ENCODE measurements at regions of chr16 and their contacts with region 1.

Region 1: DNA sequence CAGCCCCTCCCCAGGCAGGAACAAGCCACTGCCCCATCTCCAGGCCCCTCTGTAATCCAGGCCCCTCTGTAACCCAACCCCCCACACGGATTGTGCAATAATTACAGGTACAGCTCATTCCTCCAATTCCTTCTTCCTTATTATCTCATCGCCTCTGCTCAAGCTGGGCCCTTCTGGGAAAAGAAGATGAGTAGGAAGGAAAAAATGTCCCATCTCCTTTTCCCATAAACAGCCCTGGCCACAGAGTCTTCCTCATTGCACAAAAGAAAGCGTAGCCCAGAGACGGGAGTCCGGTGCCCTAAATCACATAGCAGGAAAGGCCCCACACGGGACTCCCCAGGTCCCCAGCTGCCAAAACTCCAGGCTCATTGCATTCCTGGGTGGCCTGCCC is 3.6 kb upstream of the LITAFD start:
- DNase-seq: no peak
- H3K4me3 ChIP-seq: no peak overlapping the region
- H3K4me3 Mint-ChIP-seq: no peak overlapping the region
- H3K27ac ChIP-seq: no peak overlapping the region
- H3K27ac Mint-ChIP-seq: peak overlapping the region in 2 of 8 donors; percentile 60 to 88
- H3K4me1 ChIP-seq: peaks cover 3% of the 10 kb centered on the region
- H3K4me1 Mint-ChIP-seq: peaks cover 20 to 25% (median 22%) of the 10 kb centered on the region in 3 donors
- H3K27me3 ChIP-seq: no peaks in the 10 kb centered on the region
- H3K27me3 Mint-ChIP-seq: no peaks in the 10 kb centered on the region

Region 2: DNA sequence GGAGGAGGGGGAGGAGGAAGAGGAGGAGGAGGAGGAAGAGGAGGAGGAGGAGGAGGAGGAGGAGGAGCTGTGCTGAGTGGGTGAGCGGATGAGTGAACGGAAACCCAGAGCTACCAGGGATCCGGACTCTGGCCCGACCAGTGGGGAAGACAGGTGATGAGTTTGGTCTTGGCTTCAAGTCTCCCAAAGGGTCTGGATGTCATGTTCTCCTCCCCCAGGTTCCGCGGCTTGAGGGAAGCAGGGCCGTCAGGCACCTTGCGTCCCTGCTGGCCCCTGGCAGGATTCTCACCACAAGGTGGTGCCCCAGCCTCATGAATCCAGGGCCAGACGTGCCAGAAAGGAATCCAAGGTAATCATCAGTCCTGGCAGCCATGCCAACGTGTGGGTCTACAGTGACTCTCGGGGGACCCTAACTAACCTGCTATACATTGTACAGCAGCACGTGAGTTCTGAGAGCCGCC is 217.6 kb before region 1 on chr16:
- CTCF ChIA-PET with region 1: interaction called, 24 read pairs
- POLR2A ChIA-PET with region 1: no interaction called
- DNase-seq: peak in 3 of 5 donors; percentile 28 to 71 (median 53)
- H3K4me3 ChIP-seq: no peak overlapping the region
- H3K4me3 Mint-ChIP-seq: no peak overlapping the region
- H3K27ac ChIP-seq: no peak overlapping the region
- H3K27ac Mint-ChIP-seq: no peak overlapping the region
- H3K4me1 ChIP-seq: no peaks in the 10 kb centered on the region
- H3K4me1 Mint-ChIP-seq: no peaks in the 10 kb centered on the region
- H3K27me3 ChIP-seq: no peaks in the 10 kb centered on the region
- H3K27me3 Mint-ChIP-seq: no peaks in the 10 kb centered on the region

Region 3: DNA sequence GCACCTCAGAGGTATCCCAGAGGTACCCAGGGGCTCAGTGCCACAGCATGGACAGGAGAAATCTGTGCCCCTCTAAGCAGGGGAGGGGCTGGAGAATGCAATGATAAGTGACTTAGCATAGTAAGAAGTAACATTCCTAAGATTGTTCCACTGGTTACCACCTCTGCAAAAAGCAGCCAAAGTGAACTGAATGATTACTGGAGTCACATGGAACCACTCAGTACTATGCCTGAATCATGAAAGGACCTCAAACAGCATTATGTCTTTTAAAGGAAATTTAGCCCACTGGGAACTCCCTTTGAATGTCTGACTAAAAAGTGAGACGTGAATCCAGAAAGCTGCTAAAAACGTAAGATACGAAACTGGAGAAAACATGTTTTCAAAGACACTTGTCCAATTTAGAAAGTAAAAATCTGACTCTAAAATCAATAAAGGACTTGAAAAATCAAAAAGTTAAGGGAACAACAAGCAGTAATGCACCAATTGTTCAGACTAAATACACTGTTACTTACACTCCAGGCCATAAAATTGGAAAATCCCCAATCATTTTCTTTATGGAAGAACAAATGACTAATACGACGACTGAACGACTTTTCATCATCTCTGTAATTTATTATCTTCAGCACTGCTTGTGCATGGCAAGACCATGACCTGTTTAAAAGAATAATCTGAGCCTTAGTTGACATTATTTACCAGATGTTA is 42.3 kb after region 1 on chr16:
- CTCF ChIA-PET with region 1: no interaction called
- POLR2A ChIA-PET with region 1: no interaction called
- DNase-seq: no peak
- H3K4me3 ChIP-seq: no peak overlapping the region
- H3K4me3 Mint-ChIP-seq: no peak overlapping the region
- H3K27ac ChIP-seq: no peak overlapping the region
- H3K27ac Mint-ChIP-seq: no peak overlapping the region
- H3K4me1 ChIP-seq: peaks cover 14% of the 10 kb centered on the region
- H3K4me1 Mint-ChIP-seq: peaks cover 35 to 63% (median 52%) of the 10 kb centered on the region in 3 donors
- H3K27me3 ChIP-seq: no peaks in the 10 kb centered on the region
- H3K27me3 Mint-ChIP-seq: no peaks in the 10 kb centered on the region